Sigmoid colon (tissue), 7 donors: ENCODE measurements at regions of chr22 and their contacts with region 1.

Region 1: DNA sequence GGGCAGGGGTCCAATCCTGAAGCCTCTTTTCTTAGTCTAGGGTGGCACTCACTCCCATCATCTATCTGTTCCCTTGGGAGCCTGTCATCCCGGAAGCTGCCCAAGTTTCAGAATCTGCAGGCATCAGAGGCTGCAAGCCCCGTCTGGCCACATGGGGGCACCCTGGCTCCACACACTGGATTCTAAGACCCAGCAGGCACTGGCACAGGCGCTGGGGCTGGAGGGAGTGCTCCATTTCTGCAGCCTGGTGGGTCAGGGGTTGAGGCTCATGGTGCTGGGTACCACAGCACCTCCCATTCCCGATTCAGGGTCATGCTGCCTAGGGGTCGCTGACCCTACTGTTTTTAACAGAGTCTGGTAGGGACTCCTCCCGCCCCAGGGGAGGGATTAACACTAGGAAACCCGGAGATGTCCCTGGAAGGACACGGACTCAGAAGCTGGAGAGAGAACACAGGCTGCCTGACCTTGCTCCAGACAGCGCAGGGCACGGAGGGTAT is 243.9 kb upstream of the SYN3 start:
- DNase-seq: peak; percentile 87
- H3K4me3 ChIP-seq: peak overlapping the region in 2 of 4 donors; percentile 9 to 14
- H3K27ac ChIP-seq: peak overlapping the region in 1 of 4 donors; percentile 37
- H3K4me1 ChIP-seq: peaks cover 0 to 15% (median 6%) of the 10 kb centered on the region in 4 donors
- H3K27me3 ChIP-seq: no peaks in the 10 kb centered on the region
- CTCF ChIP-seq: peak; percentile 81 to 94 (median 86)
- EP300 ChIP-seq: no peak
- POLR2A ChIP-seq: no peak

Region 2: GRCh38 chr22:33000342-33001280 is 301.5 kb before region 1 on chr22:
- intact Hi-C with region 1: no loop called
- DNase-seq: peak; percentile 76
- H3K4me3 ChIP-seq: no peak overlapping the region
- H3K27ac ChIP-seq: no peak overlapping the region
- H3K4me1 ChIP-seq: no peaks in the 10 kb centered on the region
- H3K27me3 ChIP-seq: no peaks in the 10 kb centered on the region
- CTCF ChIP-seq: peak; percentile 63 to 90 (median 80)
- EP300 ChIP-seq: no peak
- POLR2A ChIP-seq: no peak

Region 3: DNA sequence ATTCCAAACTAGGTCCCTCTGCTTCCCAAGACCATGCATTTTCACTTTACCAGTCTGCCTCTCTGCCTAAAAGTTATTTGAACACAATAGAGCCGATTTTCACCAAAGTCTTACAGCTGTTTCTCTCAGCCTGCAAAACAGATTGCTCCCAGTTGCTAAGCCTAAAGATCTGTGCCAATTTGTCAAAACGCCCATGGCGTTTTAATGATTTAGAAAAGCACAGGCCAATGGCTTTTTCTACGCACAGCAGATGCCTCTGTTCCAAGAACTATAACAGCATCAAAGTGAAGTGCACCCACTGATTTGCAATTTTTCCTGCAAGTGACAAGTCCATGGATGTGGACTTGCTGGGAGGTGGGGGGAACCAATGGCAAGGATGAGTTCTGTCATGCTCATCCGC is 70.0 kb before region 1 on chr22:
- intact Hi-C with region 1: no loop called
- DNase-seq: no peak
- H3K4me3 ChIP-seq: no peak overlapping the region
- H3K27ac ChIP-seq: no peak overlapping the region
- H3K4me1 ChIP-seq: no peaks in the 10 kb centered on the region
- H3K27me3 ChIP-seq: no peaks in the 10 kb centered on the region
- CTCF ChIP-seq: no peak
- EP300 ChIP-seq: no peak
- POLR2A ChIP-seq: no peak

Region 4: DNA sequence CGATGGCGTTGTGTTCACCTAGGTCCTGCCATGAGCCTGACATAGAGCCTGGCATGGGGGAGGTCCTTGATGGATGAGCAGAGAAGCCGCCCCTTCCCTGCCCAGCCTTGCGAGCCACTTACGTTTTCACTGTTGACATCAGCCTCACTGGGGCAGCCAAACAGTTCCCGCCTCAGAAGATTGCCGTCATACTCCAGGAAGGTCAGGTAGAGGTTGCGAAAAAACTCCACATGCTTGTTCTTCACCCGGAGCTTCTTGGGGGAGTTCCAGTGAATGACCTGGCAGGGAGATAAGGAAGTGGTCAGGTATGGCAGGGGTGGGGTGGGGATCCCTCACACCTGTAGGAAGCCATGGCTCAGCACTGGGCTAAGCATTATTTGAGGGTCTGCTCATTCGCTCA is 35.4 kb after region 1 on chr22:
- intact Hi-C with region 1: no loop called
- DNase-seq: no peak
- H3K4me3 ChIP-seq: no peak overlapping the region
- H3K27ac ChIP-seq: no peak overlapping the region
- H3K4me1 ChIP-seq: no peaks in the 10 kb centered on the region
- H3K27me3 ChIP-seq: no peaks in the 10 kb centered on the region
- CTCF ChIP-seq: no peak
- EP300 ChIP-seq: no peak
- POLR2A ChIP-seq: no peak

Region 5: GRCh38 chr22:33519071-33519973 is 217.2 kb after region 1 on chr22:
- intact Hi-C with region 1: loop called (anchors 2 kb)
- DNase-seq: no peak
- H3K4me3 ChIP-seq: no peak overlapping the region
- H3K27ac ChIP-seq: peak overlapping the region in 2 of 4 donors; percentile 18 to 27
- H3K4me1 ChIP-seq: peaks cover 0 to 19% (median 10%) of the 10 kb centered on the region in 4 donors
- H3K27me3 ChIP-seq: no peaks in the 10 kb centered on the region
- CTCF ChIP-seq: peak; percentile 63 to 64 (median 63)
- EP300 ChIP-seq: no peak
- POLR2A ChIP-seq: no peak

Region 6: GRCh38 chr22:33579448-33580093 is 277.5 kb after region 1 on chr22:
- intact Hi-C with region 1: loop called (anchors 2 kb)
- DNase-seq: peak; percentile 73
- H3K4me3 ChIP-seq: no peak overlapping the region
- H3K27ac ChIP-seq: no peak overlapping the region
- H3K4me1 ChIP-seq: peaks cover 0 to 35% (median 28%) of the 10 kb centered on the region in 4 donors
- H3K27me3 ChIP-seq: no peaks in the 10 kb centered on the region
- CTCF ChIP-seq: peak; percentile 57 to 93 (median 85)
- EP300 ChIP-seq: no peak
- POLR2A ChIP-seq: no peak

Region 7: DNA sequence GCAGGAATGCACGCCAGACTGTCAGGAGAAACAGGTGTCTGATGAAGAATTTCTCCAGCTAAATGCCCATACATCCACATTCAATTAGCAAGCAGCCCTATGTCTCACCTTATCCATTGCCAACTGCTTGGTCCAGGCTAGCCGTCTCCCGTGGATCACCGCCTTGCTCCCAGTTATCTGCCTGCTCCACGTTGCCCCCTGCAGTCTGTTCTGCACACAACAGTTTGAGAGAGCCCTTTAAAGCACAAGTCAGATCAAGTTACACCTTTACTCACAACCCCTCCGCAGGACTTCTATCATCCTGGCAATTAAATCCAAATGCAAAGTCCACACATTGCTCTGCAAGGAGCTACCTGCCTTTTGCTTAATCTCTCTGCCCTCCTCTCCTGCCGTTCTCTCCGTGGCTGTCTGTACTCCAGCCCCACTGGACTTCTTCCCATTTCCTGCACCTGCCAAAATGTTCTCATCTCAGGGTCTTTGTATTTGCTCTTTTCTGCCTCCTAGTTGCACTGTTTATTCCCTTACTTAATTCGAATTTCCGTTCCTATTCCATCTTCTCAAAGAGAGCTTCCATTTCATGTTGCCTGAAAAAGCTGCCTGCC is 803.5 kb after region 1 on chr22:
- intact Hi-C with region 1: loop called (anchors 2 kb)
- DNase-seq: peak; percentile 76
- H3K4me3 ChIP-seq: no peak overlapping the region
- H3K27ac ChIP-seq: no peak overlapping the region
- H3K4me1 ChIP-seq: no peaks in the 10 kb centered on the region
- H3K27me3 ChIP-seq: no peaks in the 10 kb centered on the region
- CTCF ChIP-seq: peak; percentile 53 to 77 (median 65)
- EP300 ChIP-seq: no peak
- POLR2A ChIP-seq: no peak

Region 8: DNA sequence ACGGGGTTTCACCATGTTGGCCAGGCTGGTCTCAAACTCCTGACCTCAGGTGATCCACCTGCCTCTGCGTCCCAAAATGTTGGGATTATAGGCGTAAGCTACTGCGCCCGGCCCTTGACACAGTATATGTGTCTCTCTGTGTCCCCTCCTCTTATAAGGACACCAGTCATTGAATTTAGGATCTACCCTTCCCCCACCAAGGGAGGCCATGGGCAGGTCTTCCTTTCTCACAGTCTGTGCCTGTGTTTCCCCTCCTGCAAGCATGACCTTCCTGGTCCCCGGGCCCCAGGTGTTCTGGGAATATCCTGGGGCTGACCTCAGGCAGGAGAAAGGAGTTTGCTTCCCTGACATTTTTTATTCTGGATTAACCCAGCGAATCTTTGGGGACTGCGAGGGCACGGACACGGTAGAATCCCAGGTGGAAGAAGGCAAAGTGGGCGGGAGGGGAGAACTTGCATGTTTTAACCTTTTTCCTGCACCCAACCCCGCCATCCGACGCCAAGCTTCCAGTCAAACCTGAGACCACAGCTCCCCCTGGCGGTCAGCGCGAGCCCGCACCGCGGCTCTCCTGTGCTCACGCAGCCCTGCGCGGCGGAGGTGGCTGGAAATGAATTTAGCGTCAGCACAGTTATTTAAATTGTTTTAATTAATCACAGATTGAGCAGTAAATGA is 1721.7 kb after region 1 on chr22:
- intact Hi-C with region 1: loop called (anchors 10 kb)
- DNase-seq: no peak
- H3K4me3 ChIP-seq: no peak overlapping the region
- H3K27ac ChIP-seq: no peak overlapping the region
- H3K4me1 ChIP-seq: no peaks in the 10 kb centered on the region
- H3K27me3 ChIP-seq: peaks cover 0 to 18% (median 10%) of the 10 kb centered on the region in 3 donors
- CTCF ChIP-seq: peak in 3 of 4 experiments; percentile 65 to 67 (median 66)
- EP300 ChIP-seq: no peak
- POLR2A ChIP-seq: no peak